Activated naive CD4-positive, alpha-beta T cell treated with anti-CD3 and anti-CD28 coated beads for 36 hours (primary cell): ENCODE measurements at regions of chr7 and their contacts with region 1.

Region 1: DNA sequence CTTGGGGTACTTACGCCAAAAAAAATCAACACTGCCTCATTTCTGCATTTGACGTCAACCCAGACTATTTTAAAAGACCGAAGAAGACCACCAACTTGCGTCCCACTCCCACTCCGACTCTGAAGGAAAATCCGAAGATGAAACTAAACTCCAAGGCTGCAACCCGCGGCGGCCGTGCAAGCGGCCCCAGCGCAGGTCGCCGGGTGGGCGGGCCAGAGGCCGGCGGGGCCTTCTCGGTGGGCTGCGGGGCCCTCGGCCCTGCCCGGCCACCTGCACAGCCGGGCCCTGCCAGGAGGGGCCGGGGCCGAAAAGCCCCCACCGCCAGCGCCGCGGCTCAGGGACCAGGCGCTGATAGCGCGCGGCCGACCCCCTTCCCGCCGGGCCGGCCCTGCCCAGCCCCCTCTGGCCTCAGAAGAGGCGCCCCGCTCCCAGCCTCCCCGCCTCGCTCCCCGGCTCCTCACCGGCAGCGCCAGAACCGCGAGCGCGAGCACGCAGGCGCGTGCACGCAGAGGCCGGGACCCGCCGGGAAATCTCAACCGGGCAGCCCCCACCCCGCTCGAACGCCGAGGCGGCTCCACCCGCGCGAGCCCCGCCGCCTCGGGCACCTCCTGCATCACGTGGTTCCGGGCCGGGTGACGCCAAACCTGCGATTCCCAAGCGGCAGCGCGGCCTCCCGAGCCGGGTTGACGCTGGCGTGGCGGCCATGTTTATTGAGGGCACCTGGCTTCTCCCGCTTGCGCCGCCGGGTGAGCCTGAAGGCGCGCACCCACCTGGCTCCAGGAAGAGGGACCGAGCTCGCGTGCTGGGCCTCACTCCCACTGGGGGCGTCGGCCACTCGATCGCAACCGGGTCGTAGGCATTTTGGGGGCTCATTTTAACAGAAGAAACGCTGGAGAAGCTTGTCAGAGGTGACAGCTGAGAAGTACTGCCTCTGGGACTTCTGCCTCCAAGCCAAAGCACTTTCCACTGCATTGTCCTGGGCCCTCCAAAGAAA is at the start of gene C7orf25:
- DNase-seq: peak; percentile 97
- H3K4me3 Mint-ChIP-seq: peak within 1 kb of the TSS; percentile 88
- H3K27ac Mint-ChIP-seq: peak within 1 kb of the TSS; percentile 90
- H3K4me1 Mint-ChIP-seq: peaks cover 60% of the 10 kb centered on the region
- H3K27me3 Mint-ChIP-seq: no peaks in the 10 kb centered on the region
- total RNA-seq, gene C7orf25: 0.93 to 2.0 TPM

Region 2: DNA sequence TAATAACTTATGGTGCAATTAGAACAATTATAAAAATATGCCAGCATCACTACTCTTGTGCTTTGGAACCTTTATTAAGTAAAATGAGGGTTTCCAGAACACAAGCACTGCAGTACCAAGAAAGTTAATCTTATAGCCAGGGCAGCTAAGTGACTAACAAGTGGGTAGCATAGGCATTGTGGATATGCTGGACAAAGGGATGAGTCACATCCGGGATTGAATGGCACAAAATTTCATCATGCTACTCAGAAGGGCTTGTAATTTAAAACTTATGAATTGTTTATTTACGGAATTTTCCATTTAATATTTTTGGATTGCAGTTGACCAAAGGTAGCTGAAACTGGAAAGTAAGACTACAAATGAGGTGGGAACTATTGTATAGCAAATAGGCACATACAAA is 250.4 kb before region 1 on chr7:
- CTCF ChIA-PET with region 1: no interaction called
- intact Hi-C with region 1: no loop called
- DNase-seq: no peak
- H3K4me3 Mint-ChIP-seq: no peak overlapping the region
- H3K27ac Mint-ChIP-seq: no peak overlapping the region
- H3K4me1 Mint-ChIP-seq: no peaks in the 10 kb centered on the region
- H3K27me3 Mint-ChIP-seq: no peaks in the 10 kb centered on the region

Region 3: GRCh38 chr7:42886129-42886528 is 25.6 kb before region 1 on chr7:
- CTCF ChIA-PET with region 1: interaction called, 6 read pairs
- intact Hi-C with region 1: loop called (anchors 1 kb)
- DNase-seq: no peak
- H3K4me3 Mint-ChIP-seq: no peak overlapping the region
- H3K27ac Mint-ChIP-seq: no peak overlapping the region
- H3K4me1 Mint-ChIP-seq: peaks cover 18% of the 10 kb centered on the region
- H3K27me3 Mint-ChIP-seq: no peaks in the 10 kb centered on the region

Region 4: GRCh38 chr7:42931834-42932651 is 20.3 kb after region 1 on chr7 and contains the starts of genes MRPL32 and PSMA2:
- CTCF ChIA-PET with region 1: interaction called, 6 read pairs
- intact Hi-C with region 1: loop called (anchors 1 kb)
- DNase-seq: peak; percentile 95
- H3K4me3 Mint-ChIP-seq: peak within 1 kb of the TSS; percentile 100
- H3K27ac Mint-ChIP-seq: peak within 1 kb of the TSS; percentile 100
- H3K4me1 Mint-ChIP-seq: peaks cover 60% of the 10 kb centered on the region
- H3K27me3 Mint-ChIP-seq: no peaks in the 10 kb centered on the region
- total RNA-seq, gene MRPL32: 67.4 to 71.8 TPM
- total RNA-seq, gene PSMA2: 199 to 221 TPM

Region 5: DNA sequence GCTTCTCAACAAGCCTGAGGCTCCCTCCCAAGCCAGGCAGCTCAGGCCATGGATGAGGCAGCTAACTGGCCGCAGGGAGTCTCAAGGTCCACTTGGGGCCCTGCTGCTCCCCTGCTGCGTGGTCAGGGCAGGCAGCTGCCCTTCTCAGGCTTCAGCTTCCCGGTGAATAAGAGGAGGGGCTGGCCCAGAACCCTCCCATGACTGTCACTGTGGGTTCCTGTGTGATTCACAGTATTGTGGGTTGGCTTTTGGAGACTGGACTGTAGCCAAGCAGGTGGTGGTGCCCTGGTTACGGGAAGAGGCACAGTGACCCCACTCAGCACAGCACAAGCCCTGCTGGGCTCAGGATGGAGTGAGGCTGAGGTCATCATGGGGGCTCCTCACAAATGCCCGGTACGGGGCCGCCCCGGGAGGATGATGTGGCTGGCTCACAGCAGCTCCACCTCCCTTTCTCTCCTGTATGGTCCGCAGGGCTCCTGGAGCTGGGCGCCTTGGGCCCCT is 390.5 kb after region 1 on chr7:
- CTCF ChIA-PET with region 1: no interaction called
- intact Hi-C with region 1: loop called (anchors 5 kb)
- DNase-seq: peak; percentile 73
- H3K4me3 Mint-ChIP-seq: no peak overlapping the region
- H3K27ac Mint-ChIP-seq: no peak overlapping the region
- H3K4me1 Mint-ChIP-seq: peaks cover 36% of the 10 kb centered on the region
- H3K27me3 Mint-ChIP-seq: no peaks in the 10 kb centered on the region

Region 6: GRCh38 chr7:44885394-44886317 is 1973.9 kb after region 1 on chr7 and contains the start of gene PURB:
- CTCF ChIA-PET with region 1: no interaction called
- intact Hi-C with region 1: loop called (anchors 10 kb)
- DNase-seq: peak; percentile 98
- H3K4me3 Mint-ChIP-seq: peak within 1 kb of the TSS; percentile 96
- H3K27ac Mint-ChIP-seq: peak within 1 kb of the TSS; percentile 100
- H3K4me1 Mint-ChIP-seq: peaks cover 46% of the 10 kb centered on the region
- H3K27me3 Mint-ChIP-seq: no peaks in the 10 kb centered on the region
- total RNA-seq, gene PURB: 12.9 to 13.1 TPM